GM12878 (cell line): ENCODE measurements at regions of chr15 and their contacts with region 1.

Region 1: GRCh38 chr15:69058830-69059556 is 44.5 kb downstream of the NOX5 start:
- DNase-seq: peak; percentile 19
- ATAC-seq: peak; percentile 87
- H3K4me3 ChIP-seq: no peak overlapping the region
- H3K27ac ChIP-seq: no peak overlapping the region
- H3K4me1 ChIP-seq: no peaks in the 10 kb centered on the region
- H3K27me3 ChIP-seq: no peaks in the 10 kb centered on the region
- CTCF ChIP-seq: peak; percentile 69 to 89 (median 79); a peak in 5 of 6 replicates
- EP300 ChIP-seq: 0 out of 4 replicates have a peak, but pooled peaks of 1 of the 2 experiments have one; percentile 19
- POLR2A ChIP-seq: no peak
- RAD21 ChIP-seq: peak; percentile 88

Region 2: GRCh38 chr15:68795298-68795848 is 263.6 kb before region 1 on chr15:
- CTCF ChIA-PET with region 1: no interaction called
- POLR2A ChIA-PET with region 1: no interaction called
- RAD21 ChIA-PET with region 1: no interaction called
- SMC1A ChIA-PET with region 1: no interaction called
- in situ Hi-C with region 1: no loop called
- intact Hi-C with region 1: no loop called
- DNase-seq: no peak
- ATAC-seq: peak; percentile 62
- H3K4me3 ChIP-seq: peak overlapping the region; percentile 60
- H3K27ac ChIP-seq: peak overlapping the region; percentile 72
- H3K4me1 ChIP-seq: peaks cover 83% of the 10 kb centered on the region
- H3K27me3 ChIP-seq: no peaks in the 10 kb centered on the region
- CTCF ChIP-seq: no peak
- EP300 ChIP-seq: no peak
- POLR2A ChIP-seq: peak; percentile 77
- RAD21 ChIP-seq: no peak

Region 3: GRCh38 chr15:68983961-68984481 is 75.0 kb before region 1 on chr15:
- CTCF ChIA-PET with region 1: no interaction called
- POLR2A ChIA-PET with region 1: no interaction called
- RAD21 ChIA-PET with region 1: no interaction called
- SMC1A ChIA-PET with region 1: no interaction called
- in situ Hi-C with region 1: no loop called
- intact Hi-C with region 1: no loop called
- DNase-seq: no peak
- ATAC-seq: no peak
- H3K4me3 ChIP-seq: no peak overlapping the region
- H3K27ac ChIP-seq: no peak overlapping the region
- H3K4me1 ChIP-seq: no peaks in the 10 kb centered on the region
- H3K27me3 ChIP-seq: peaks cover 0 to 1% of the 10 kb centered on the region in 2 experiments; a peak in 2 of 4 replicates
- CTCF ChIP-seq: no peak
- EP300 ChIP-seq: no peak
- POLR2A ChIP-seq: no peak
- RAD21 ChIP-seq: no peak

Region 4: GRCh38 chr15:69225355-69226025 is 166.5 kb after region 1 on chr15:
- CTCF ChIA-PET with region 1: interaction called, 55 read pairs
- POLR2A ChIA-PET with region 1: no interaction called
- RAD21 ChIA-PET with region 1: interaction called, 8 read pairs
- SMC1A ChIA-PET with region 1: interaction called, 3 read pairs
- in situ Hi-C with region 1: no loop called
- intact Hi-C with region 1: loop called (anchors 1 kb)
- DNase-seq: no peak
- ATAC-seq: no peak
- H3K4me3 ChIP-seq: no peak overlapping the region
- H3K27ac ChIP-seq: no peak overlapping the region
- H3K4me1 ChIP-seq: no peaks in the 10 kb centered on the region
- H3K27me3 ChIP-seq: no peaks in the 10 kb centered on the region
- CTCF ChIP-seq: peak; percentile 10 to 44 (median 17); a peak in 2 of 6 replicates
- EP300 ChIP-seq: no peak
- POLR2A ChIP-seq: no peak
- RAD21 ChIP-seq: no peak; the same call in 1 of the 2 replicates

Region 5: GRCh38 chr15:69265347-69265955 is 206.5 kb after region 1 on chr15:
- CTCF ChIA-PET with region 1: interaction called, 12 read pairs
- POLR2A ChIA-PET with region 1: no interaction called
- RAD21 ChIA-PET with region 1: interaction called, 3 read pairs
- SMC1A ChIA-PET with region 1: interaction called, 9 read pairs
- in situ Hi-C with region 1: no loop called
- intact Hi-C with region 1: loop called (anchors 1 kb)
- DNase-seq: no peak
- ATAC-seq: no peak
- H3K4me3 ChIP-seq: no peak overlapping the region
- H3K27ac ChIP-seq: no peak overlapping the region
- H3K4me1 ChIP-seq: no peaks in the 10 kb centered on the region
- H3K27me3 ChIP-seq: no peaks in the 10 kb centered on the region
- CTCF ChIP-seq: peak; percentile 34 to 49 (median 42); a peak in 4 of 6 replicates
- EP300 ChIP-seq: no peak
- POLR2A ChIP-seq: no peak
- RAD21 ChIP-seq: 0 out of 2 replicates have a peak, but pooled peaks have one; percentile 18

Region 6: GRCh38 chr15:69388260-69388705 is 329.3 kb after region 1 on chr15:
- CTCF ChIA-PET with region 1: interaction called, 27 read pairs
- POLR2A ChIA-PET with region 1: no interaction called
- RAD21 ChIA-PET with region 1: interaction called, 3 read pairs
- SMC1A ChIA-PET with region 1: interaction called, 3 read pairs
- in situ Hi-C with region 1: loop called (anchors 5 kb)
- intact Hi-C with region 1: no loop called
- DNase-seq: no peak
- ATAC-seq: no peak
- H3K4me3 ChIP-seq: no peak overlapping the region
- H3K27ac ChIP-seq: no peak overlapping the region
- H3K4me1 ChIP-seq: no peaks in the 10 kb centered on the region
- H3K27me3 ChIP-seq: peaks cover 0 to 3% of the 10 kb centered on the region in 2 experiments; a peak in 1 of 4 replicates
- CTCF ChIP-seq: no peak
- EP300 ChIP-seq: no peak
- POLR2A ChIP-seq: no peak
- RAD21 ChIP-seq: no peak

Region 7: GRCh38 chr15:69394556-69395282 is 335.7 kb after region 1 on chr15:
- CTCF ChIA-PET with region 1: interaction called, 27 read pairs
- POLR2A ChIA-PET with region 1: no interaction called
- RAD21 ChIA-PET with region 1: interaction called, 6 read pairs
- SMC1A ChIA-PET with region 1: interaction called, 3 read pairs
- in situ Hi-C with region 1: loop called (anchors 5 kb)
- intact Hi-C with region 1: loop called (anchors 1 kb)
- DNase-seq: no peak
- ATAC-seq: peak; percentile 99
- H3K4me3 ChIP-seq: no peak overlapping the region
- H3K27ac ChIP-seq: no peak overlapping the region
- H3K4me1 ChIP-seq: no peaks in the 10 kb centered on the region
- H3K27me3 ChIP-seq: no peaks in the 10 kb centered on the region
- CTCF ChIP-seq: peak; percentile 85 to 93 (median 85)
- EP300 ChIP-seq: no peak
- POLR2A ChIP-seq: no peak
- RAD21 ChIP-seq: peak; percentile 61